ENCODE measurements at regions of chr13 and their contacts with region 1.

Region 1: DNA sequence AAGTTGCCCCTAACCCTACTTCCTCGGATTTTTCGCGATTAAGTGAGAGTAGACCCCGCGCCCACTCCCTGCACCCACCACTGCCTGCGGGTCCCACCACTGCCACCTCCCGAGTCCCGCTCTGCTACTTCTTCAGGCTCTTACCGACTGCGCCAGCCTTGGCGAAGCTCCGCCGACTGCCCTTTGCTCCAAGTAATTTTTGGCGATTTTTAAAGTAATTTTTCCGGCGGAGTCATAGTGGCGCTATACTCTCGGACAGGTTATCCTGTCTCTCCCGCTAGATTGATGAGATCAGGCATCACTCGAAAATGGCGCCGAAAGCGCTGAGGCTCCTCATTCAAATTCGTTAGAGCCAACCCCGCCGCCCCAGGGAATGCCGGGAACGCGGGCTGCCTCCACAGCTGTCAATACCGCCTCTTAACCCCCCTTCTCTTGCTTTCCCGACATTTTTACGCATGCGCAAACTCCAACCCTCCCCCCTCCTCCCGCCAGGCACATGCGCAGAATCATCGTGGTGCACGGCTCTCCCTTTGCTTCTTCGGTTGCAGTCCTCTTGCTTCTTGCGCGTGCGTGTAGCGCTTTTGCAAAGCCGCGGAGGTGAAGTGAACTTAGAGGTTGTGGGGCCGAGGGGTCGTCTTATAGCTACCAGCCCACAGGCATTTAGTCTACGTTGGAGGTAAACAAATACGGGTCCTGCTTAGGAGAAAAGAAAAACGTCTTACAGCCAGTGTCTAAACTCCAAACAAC is 66.6 kb downstream of the KCNRG start:
- DNase-seq: peak; percentile 97 to 100
- ATAC-seq: peak; percentile 71 to 90 (median 79)
- H3K4me3 ChIP-seq: peak overlapping the region; percentile 79
- H3K4me3 Mint-ChIP-seq: peak overlapping the region; percentile 99
- H3K27ac ChIP-seq: peak overlapping the region; percentile 93
- H3K27ac Mint-ChIP-seq: peak overlapping the region; percentile 96 to 97
- H3K4me1 ChIP-seq: peaks cover 12% of the 10 kb centered on the region
- H3K4me1 Mint-ChIP-seq: peaks cover 44 to 56% of the 10 kb centered on the region in 2 donors
- H3K27me3 ChIP-seq: peaks cover 2% of the 10 kb centered on the region
- H3K27me3 Mint-ChIP-seq: peaks cover 0 to 3% of the 10 kb centered on the region in 2 donors
- CTCF ChIP-seq: no peak

Region 2: DNA sequence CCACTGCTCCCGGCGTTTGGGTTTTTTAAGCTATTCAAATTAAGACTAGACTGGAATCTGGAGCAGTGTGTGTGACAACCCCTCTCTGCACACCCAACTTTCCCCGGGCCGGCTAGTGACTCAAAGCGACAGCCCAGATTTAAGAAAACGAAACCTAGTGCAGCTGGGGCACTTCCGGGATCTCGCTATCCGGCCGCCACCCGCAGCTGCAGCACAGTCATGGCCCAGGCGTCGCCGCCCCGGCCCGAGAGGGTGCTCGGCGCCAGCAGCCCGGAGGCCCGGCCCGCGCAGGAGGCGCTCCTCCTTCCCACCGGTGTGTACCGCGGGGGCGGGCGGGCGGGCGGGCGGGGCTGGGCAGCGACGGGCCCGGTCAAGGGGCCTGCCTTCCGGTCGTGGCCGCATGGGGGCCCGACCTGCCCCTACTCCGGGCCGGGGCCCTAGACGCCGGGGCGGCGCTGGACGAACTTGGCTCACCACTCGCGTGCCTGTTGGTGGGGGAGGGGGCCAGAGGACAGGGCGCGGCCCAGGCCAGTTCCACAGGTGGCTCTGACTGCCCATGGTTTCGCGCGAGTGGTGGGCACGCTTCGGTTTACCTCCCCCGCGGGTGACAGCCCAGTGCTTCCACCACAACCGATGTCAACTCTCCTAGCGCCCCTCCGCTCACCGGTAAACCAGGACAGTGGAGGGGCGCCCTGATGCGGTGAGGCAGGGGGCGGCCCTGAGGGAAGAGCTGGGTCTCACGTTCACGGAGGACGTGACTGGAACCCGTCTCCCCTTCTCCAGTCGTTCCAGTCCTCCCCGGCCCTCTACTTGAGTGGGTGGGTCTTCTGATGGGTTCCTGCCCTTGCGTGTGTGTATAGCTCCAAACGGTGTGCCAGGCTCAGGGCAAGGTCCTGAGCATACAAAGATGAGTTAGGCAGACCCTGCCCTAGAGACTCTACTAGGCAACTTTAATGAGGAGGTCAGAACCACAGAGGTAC is 585.8 kb before region 1 on chr13 and contains the start of gene PHF11:
- intact Hi-C with region 1: loop called (anchors 5 kb)
- DNase-seq: peak; percentile 83 to 93
- ATAC-seq: peak; percentile 82 to 93 (median 89)
- H3K4me3 ChIP-seq: peak within 1 kb of the TSS; percentile 71
- H3K4me3 Mint-ChIP-seq: peak within 1 kb of the TSS; percentile 97
- H3K27ac ChIP-seq: peak within 1 kb of the TSS; percentile 95
- H3K27ac Mint-ChIP-seq: peak within 1 kb of the TSS; percentile 81 to 97
- H3K4me1 ChIP-seq: peaks cover 20% of the 10 kb centered on the region
- H3K4me1 Mint-ChIP-seq: peaks cover 36 to 39% of the 10 kb centered on the region in 2 donors
- H3K27me3 ChIP-seq: no peaks in the 10 kb centered on the region
- H3K27me3 Mint-ChIP-seq: no peaks in the 10 kb centered on the region
- CTCF ChIP-seq: no peak
- total RNA-seq, gene PHF11: 89.0 to 113 (median 111) TPM

Region 3: GRCh38 chr13:49996951-49997895 is 84.6 kb before region 1 on chr13 and contains the start of gene TRIM13:
- intact Hi-C with region 1: loop called (anchors 5 kb)
- DNase-seq: peak; percentile 79 to 90
- ATAC-seq: peak; percentile 79 to 89 (median 84)
- H3K4me3 ChIP-seq: peak within 1 kb of the TSS; percentile 100
- H3K4me3 Mint-ChIP-seq: peak within 1 kb of the TSS; percentile 90
- H3K27ac ChIP-seq: peak within 1 kb of the TSS; percentile 99
- H3K27ac Mint-ChIP-seq: peak within 1 kb of the TSS; percentile 80 to 90
- H3K4me1 ChIP-seq: peaks cover 17% of the 10 kb centered on the region
- H3K4me1 Mint-ChIP-seq: peaks cover 18 to 35% of the 10 kb centered on the region in 2 donors
- H3K27me3 ChIP-seq: no peaks in the 10 kb centered on the region
- H3K27me3 Mint-ChIP-seq: no peaks in the 10 kb centered on the region
- CTCF ChIP-seq: peak; percentile 79
- total RNA-seq, gene TRIM13: 18.9 to 22.1 (median 20.6) TPM

Region 4: GRCh38 chr13:50094615-50095293 is 12.9 kb after region 1 on chr13:
- intact Hi-C with region 1: no loop called
- DNase-seq: no peak
- ATAC-seq: no peak
- H3K4me3 ChIP-seq: no peak overlapping the region
- H3K4me3 Mint-ChIP-seq: no peak overlapping the region
- H3K27ac ChIP-seq: no peak overlapping the region
- H3K27ac Mint-ChIP-seq: no peak overlapping the region
- H3K4me1 ChIP-seq: peaks cover 4% of the 10 kb centered on the region
- H3K4me1 Mint-ChIP-seq: peaks cover 12 to 17% of the 10 kb centered on the region in 2 donors
- H3K27me3 ChIP-seq: no peaks in the 10 kb centered on the region
- H3K27me3 Mint-ChIP-seq: no peaks in the 10 kb centered on the region
- CTCF ChIP-seq: no peak

Region 5: GRCh38 chr13:50512474-50513299 is 430.8 kb after region 1 on chr13:
- intact Hi-C with region 1: loop called (anchors 1 kb)
- DNase-seq: peak; percentile 37 to 65
- ATAC-seq: peak; percentile 86 to 89 (median 86)
- H3K4me3 ChIP-seq: peak overlapping the region; percentile 33
- H3K4me3 Mint-ChIP-seq: no peak overlapping the region
- H3K27ac ChIP-seq: peak overlapping the region; percentile 85
- H3K27ac Mint-ChIP-seq: no peak overlapping the region
- H3K4me1 ChIP-seq: peaks cover 15% of the 10 kb centered on the region
- H3K4me1 Mint-ChIP-seq: peaks cover 0 to 4% of the 10 kb centered on the region in 2 donors
- H3K27me3 ChIP-seq: no peaks in the 10 kb centered on the region
- H3K27me3 Mint-ChIP-seq: no peaks in the 10 kb centered on the region
- CTCF ChIP-seq: no peak

Region 6: GRCh38 chr13:50801087-50801931 is 719.5 kb after region 1 on chr13:
- intact Hi-C with region 1: loop called (anchors 5 kb)
- DNase-seq: peak; percentile 36 to 86
- ATAC-seq: peak; percentile 91 to 98 (median 97)
- H3K4me3 ChIP-seq: no peak overlapping the region
- H3K4me3 Mint-ChIP-seq: no peak overlapping the region
- H3K27ac ChIP-seq: peak overlapping the region; percentile 4
- H3K27ac Mint-ChIP-seq: no peak overlapping the region
- H3K4me1 ChIP-seq: peaks cover 7% of the 10 kb centered on the region
- H3K4me1 Mint-ChIP-seq: peaks cover 0 to 6% of the 10 kb centered on the region in 2 donors
- H3K27me3 ChIP-seq: no peaks in the 10 kb centered on the region
- H3K27me3 Mint-ChIP-seq: peaks cover 7 to 9% of the 10 kb centered on the region in 2 donors
- CTCF ChIP-seq: peak; percentile 80

Region 7: GRCh38 chr13:51083706-51084105 is 1001.9 kb after region 1 on chr13:
- intact Hi-C with region 1: no loop called
- DNase-seq: no peak
- ATAC-seq: no peak
- H3K4me3 ChIP-seq: no peak overlapping the region
- H3K4me3 Mint-ChIP-seq: no peak overlapping the region
- H3K27ac ChIP-seq: no peak overlapping the region
- H3K27ac Mint-ChIP-seq: no peak overlapping the region
- H3K4me1 ChIP-seq: no peaks in the 10 kb centered on the region
- H3K4me1 Mint-ChIP-seq: no peaks in the 10 kb centered on the region
- H3K27me3 ChIP-seq: no peaks in the 10 kb centered on the region
- H3K27me3 Mint-ChIP-seq: peaks cover 0 to 2% of the 10 kb centered on the region in 2 donors
- CTCF ChIP-seq: no peak